Activated naive CD4-positive, alpha-beta T cell treated with anti-CD3 and anti-CD28 coated beads for 36 hours (primary cell): ENCODE measurements at regions of chr15 and their contacts with region 1.

Region 1: DNA sequence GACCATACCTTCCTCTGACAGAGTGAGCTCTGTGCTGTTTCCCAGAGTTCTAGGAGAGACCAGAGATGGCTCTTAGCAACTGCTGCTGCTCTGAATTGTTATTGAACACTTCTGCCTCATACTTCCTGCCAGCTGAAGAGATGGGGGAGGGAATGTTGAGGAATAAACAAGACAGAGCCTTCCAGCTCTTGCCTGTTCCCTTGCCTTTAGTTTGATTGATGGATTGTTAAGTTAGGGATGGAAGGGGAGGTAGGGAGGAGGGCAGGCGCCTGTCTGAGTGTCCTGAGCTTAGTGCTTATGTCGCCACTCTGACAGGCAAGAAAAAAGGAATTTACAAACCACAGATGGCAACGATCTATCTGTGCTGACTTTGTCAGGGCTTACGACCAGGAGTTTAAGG is 42.8 kb downstream of the ZNF609 start:
- DNase-seq: peak; percentile 27
- H3K4me3 Mint-ChIP-seq: peak overlapping the region; percentile 5
- H3K27ac Mint-ChIP-seq: peak overlapping the region; percentile 86
- H3K4me1 Mint-ChIP-seq: peaks cover 83% of the 10 kb centered on the region
- H3K27me3 Mint-ChIP-seq: no peaks in the 10 kb centered on the region

Region 2: DNA sequence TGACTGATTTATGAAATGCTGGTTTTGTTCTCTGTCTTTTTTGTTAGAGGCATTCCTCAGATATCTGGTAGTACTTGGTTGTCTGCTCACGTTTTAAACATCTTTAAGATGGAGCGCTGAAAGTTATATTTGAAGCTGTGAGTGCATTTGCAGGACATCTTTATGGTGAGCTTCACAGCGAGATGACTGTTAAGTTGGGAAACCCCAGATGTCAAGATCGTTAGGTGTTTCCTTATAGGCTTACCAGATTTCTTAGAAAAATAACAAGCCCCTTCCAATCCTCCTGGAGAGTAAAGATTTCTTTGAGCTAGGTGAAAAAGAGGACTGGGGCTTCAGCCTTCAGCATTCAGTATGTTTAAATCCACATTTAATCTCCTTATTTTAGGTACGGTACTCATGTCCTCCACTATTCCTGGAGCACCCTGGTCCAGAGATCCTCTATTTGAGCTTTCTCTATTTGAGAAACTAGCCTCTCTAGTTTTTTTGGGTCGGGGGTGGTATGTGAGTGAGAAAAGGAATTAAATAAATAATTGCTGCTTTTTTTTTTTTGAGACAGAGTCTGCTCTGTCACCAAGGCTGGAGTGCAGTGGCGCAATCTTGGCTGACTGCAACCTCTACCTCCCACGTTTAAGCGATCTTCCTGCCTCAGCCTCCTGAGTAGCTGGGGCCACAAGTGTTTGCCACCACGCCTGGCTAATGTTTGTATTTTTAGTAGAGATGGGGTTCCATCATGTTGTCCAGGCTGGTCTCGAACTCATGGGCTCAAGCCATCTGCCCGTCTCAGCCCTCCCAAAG is 29.5 kb after region 1 on chr15:
- CTCF ChIA-PET with region 1: no interaction called
- intact Hi-C with region 1: loop called (anchors 2 kb)
- DNase-seq: peak; percentile 54
- H3K4me3 Mint-ChIP-seq: peak overlapping the region; percentile 24
- H3K27ac Mint-ChIP-seq: peak overlapping the region; percentile 54
- H3K4me1 Mint-ChIP-seq: peaks cover 68% of the 10 kb centered on the region
- H3K27me3 Mint-ChIP-seq: no peaks in the 10 kb centered on the region